Activated CD4-positive, alpha-beta T cell treated with anti-CD3 and anti-CD28 coated beads for 36 hours (primary cell): ENCODE measurements at regions of chr14 and their contacts with region 1.

Region 1: GRCh38 chr14:65206448-65207096 is 104.3 kb upstream of the MAX start:
- DNase-seq: peak; percentile 51
- ATAC-seq: peak; percentile 84
- H3K4me3 Mint-ChIP-seq: peak overlapping the region; percentile 55
- H3K27ac Mint-ChIP-seq: peak overlapping the region; percentile 82
- H3K4me1 Mint-ChIP-seq: peaks cover 59% of the 10 kb centered on the region
- H3K27me3 Mint-ChIP-seq: no peaks in the 10 kb centered on the region

Region 2: DNA sequence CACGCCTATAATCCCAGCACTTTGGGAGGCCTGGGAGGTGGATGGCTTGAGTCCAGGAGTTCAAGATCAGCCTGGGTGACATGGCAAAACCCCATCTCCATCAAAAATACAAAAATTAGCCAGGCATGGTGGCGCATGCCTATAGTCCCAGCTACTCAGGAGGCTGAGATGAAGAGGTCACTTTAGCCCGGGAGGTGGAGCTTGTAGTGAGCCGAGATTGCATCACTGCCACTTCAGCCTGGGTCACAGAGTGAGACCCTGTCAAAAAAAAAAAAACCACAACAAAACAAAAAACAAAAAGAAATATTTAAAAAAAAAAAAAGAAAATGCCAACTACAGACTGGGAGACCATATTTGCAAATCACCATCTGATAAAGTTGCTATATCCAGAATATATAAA is 1582.4 kb before region 1 on chr14:
- CTCF ChIA-PET with region 1: no interaction called
- POLR2A ChIA-PET with region 1: no interaction called
- intact Hi-C with region 1: no loop called
- DNase-seq: no peak
- ATAC-seq: no peak
- H3K4me3 Mint-ChIP-seq: no peak overlapping the region
- H3K27ac Mint-ChIP-seq: no peak overlapping the region
- H3K4me1 Mint-ChIP-seq: peaks cover 23% of the 10 kb centered on the region
- H3K27me3 Mint-ChIP-seq: no peaks in the 10 kb centered on the region

Region 3: DNA sequence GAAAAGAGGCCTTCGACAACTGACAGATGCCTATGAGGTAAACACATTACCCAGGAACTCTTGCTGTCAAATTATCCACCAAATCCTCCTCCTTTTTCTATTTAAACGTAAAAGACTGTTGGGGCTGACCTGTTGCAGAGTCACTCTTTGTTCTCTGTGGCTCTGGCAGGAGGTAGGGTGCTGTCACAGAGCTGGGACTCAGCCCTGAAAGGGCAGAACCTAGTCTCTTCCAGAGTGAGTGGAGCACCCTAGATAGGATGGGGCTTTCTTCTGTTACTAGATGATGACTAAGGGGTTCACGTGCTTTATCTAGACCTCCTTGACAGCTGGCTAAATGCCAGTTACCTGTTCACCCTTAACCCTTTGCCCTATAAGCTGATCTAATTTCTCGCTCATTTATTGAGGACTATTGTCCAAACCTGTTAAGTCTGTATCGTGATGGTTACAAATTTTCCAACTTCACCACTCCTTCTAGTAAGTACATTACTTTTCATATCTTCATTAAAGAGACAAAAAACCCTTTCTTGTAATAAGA is 194.2 kb before region 1 on chr14:
- CTCF ChIA-PET with region 1: no interaction called
- POLR2A ChIA-PET with region 1: no interaction called
- intact Hi-C with region 1: no loop called
- DNase-seq: no peak
- ATAC-seq: no peak
- H3K4me3 Mint-ChIP-seq: no peak overlapping the region
- H3K27ac Mint-ChIP-seq: no peak overlapping the region
- H3K4me1 Mint-ChIP-seq: no peaks in the 10 kb centered on the region
- H3K27me3 Mint-ChIP-seq: no peaks in the 10 kb centered on the region

Region 4: GRCh38 chr14:65102441-65103149 is 104.0 kb before region 1 on chr14 and contains the start of gene MAX:
- CTCF ChIA-PET with region 1: no interaction called
- POLR2A ChIA-PET with region 1: no interaction called
- intact Hi-C with region 1: loop called (anchors 1 to 5 kb)
- DNase-seq: peak; percentile 99
- ATAC-seq: peak; percentile 95
- H3K4me3 Mint-ChIP-seq: peak within 1 kb of the TSS; percentile 89
- H3K27ac Mint-ChIP-seq: peak within 1 kb of the TSS; percentile 96
- H3K4me1 Mint-ChIP-seq: peaks cover 40% of the 10 kb centered on the region
- H3K27me3 Mint-ChIP-seq: peaks cover 2% of the 10 kb centered on the region
- total RNA-seq, gene MAX: 93.6 to 136 TPM

Region 5: GRCh38 chr14:65222440-65222858 is 15.9 kb after region 1 on chr14:
- CTCF ChIA-PET with region 1: interaction called, 4 read pairs
- POLR2A ChIA-PET with region 1: interaction called, 3 read pairs
- intact Hi-C with region 1: loop called in 1 of 2 experiments (anchors 2 kb)
- DNase-seq: peak; percentile 78
- ATAC-seq: peak; percentile 96
- H3K4me3 Mint-ChIP-seq: no peak overlapping the region
- H3K27ac Mint-ChIP-seq: peak overlapping the region; percentile 51
- H3K4me1 Mint-ChIP-seq: peaks cover 32% of the 10 kb centered on the region
- H3K27me3 Mint-ChIP-seq: no peaks in the 10 kb centered on the region

Region 6: DNA sequence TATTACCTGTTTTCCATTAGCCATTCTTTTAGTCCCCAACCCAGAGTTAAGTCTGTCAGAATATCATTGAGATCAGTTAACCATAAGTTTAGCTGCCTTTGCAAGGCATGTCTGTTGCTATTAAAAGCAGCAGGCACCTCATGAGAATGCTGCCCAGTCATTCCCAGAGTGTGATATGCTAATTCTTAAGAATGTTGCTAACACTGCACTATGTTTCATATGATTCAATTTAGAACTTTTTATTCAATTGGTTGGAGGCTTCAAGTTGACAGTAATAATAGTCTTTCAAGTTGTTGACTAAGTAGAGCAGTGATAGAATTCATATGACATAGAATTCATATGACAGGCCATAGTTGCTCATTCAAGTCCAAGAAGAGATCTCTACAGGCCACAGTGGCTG is 498.3 kb after region 1 on chr14:
- CTCF ChIA-PET with region 1: no interaction called
- POLR2A ChIA-PET with region 1: interaction called, 4 read pairs
- intact Hi-C with region 1: loop called (anchors 1 to 10 kb)
- DNase-seq: peak; percentile 67
- ATAC-seq: peak; percentile 96
- H3K4me3 Mint-ChIP-seq: no peak overlapping the region
- H3K27ac Mint-ChIP-seq: peak overlapping the region; percentile 84
- H3K4me1 Mint-ChIP-seq: peaks cover 20% of the 10 kb centered on the region
- H3K27me3 Mint-ChIP-seq: no peaks in the 10 kb centered on the region

Region 7: DNA sequence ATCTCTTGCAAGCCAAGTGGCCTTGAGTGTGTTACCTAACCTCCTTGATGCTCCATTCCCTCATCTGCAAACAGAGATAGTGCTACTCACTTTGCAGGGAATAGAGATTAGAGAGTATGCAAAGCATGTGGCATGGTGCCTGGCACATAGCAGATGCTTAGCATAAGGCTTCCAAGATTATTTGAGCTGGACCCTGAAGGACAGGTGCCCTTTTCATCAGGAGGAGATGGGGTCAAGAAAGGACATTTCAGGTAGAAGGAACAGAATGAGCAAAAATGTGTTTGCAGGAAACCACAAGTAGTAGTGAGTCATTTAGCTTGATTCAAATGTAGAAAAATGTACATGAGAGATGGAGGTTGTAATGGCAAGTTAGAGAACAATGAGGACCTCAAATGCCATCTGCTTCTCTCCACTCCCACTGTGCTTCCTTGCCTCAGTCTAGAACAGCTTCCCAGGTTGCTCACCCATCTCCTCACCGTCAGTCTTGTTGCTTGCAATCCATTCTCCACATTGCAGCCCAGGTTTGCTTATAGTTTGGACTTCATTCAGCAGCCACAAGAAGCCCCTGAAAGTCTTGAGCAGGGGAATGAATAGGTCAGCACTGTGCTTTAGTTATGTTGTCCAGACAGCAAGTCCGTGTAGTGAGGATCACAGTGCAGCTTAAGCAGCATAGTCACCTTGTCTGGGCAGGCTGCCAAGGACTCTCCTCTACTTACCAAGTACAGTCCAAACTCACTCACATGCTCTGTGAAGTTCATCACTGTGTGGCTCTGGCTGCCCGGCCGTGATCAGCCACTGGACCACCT is 743.3 kb after region 1 on chr14:
- CTCF ChIA-PET with region 1: no interaction called
- POLR2A ChIA-PET with region 1: no interaction called
- intact Hi-C with region 1: loop called in 1 of 2 experiments (anchors 5 kb)
- DNase-seq: peak; percentile 77
- ATAC-seq: peak; percentile 92
- H3K4me3 Mint-ChIP-seq: no peak overlapping the region
- H3K27ac Mint-ChIP-seq: peak overlapping the region; percentile 63
- H3K4me1 Mint-ChIP-seq: peaks cover 35% of the 10 kb centered on the region
- H3K27me3 Mint-ChIP-seq: peaks cover 12% of the 10 kb centered on the region